T-cell (primary cell): ENCODE measurements at regions of chr22 and their contacts with region 1.

Region 1: GRCh38 chr22:38412435-38413084 is 42.4 kb downstream of the KCNJ4 start:
- DNase-seq: peak in 26 of 35 experiments; percentile 11 to 54 (median 30)
- ATAC-seq: peak in 3 of 4 experiments; percentile 38 to 70 (median 46)
- H3K4me3 ChIP-seq: no peak overlapping the region
- H3K4me3 Mint-ChIP-seq: peak overlapping the region in 1 of 3 donors; percentile 37
- H3K27ac ChIP-seq: no peak overlapping the region
- H3K27ac Mint-ChIP-seq: no peak overlapping the region
- H3K4me1 ChIP-seq: peaks cover 0 to 8% of the 10 kb centered on the region in 2 experiments
- H3K4me1 Mint-ChIP-seq: peaks cover 0 to 4% (median 2%) of the 10 kb centered on the region in 3 donors
- H3K27me3 ChIP-seq: peaks cover 0 to 5% of the 10 kb centered on the region in 2 experiments
- H3K27me3 Mint-ChIP-seq: peaks cover 0 to 2% of the 10 kb centered on the region in 2 donors

Region 2: GRCh38 chr22:38327805-38328204 is 84.8 kb before region 1 on chr22:
- CTCF ChIA-PET with region 1: no interaction called
- POLR2A ChIA-PET with region 1: no interaction called
- DNase-seq: peak in 1 of 35 experiments; percentile 30
- ATAC-seq: peak in 2 of 4 experiments; percentile 15 to 67
- H3K4me3 ChIP-seq: peak overlapping the region in 1 of 2 donors; percentile 10
- H3K4me3 Mint-ChIP-seq: peak overlapping the region in 2 of 3 donors; percentile 15 to 26
- H3K27ac ChIP-seq: no peak overlapping the region
- H3K27ac Mint-ChIP-seq: peak overlapping the region in 1 of 2 donors; percentile 74
- H3K4me1 ChIP-seq: peaks cover 0 to 11% of the 10 kb centered on the region in 2 experiments
- H3K4me1 Mint-ChIP-seq: peaks cover 4 to 5% (median 4%) of the 10 kb centered on the region in 3 donors
- H3K27me3 ChIP-seq: peaks cover 0 to 18% of the 10 kb centered on the region in 2 experiments
- H3K27me3 Mint-ChIP-seq: peaks cover 4 to 7% of the 10 kb centered on the region in 2 donors

Region 3: DNA sequence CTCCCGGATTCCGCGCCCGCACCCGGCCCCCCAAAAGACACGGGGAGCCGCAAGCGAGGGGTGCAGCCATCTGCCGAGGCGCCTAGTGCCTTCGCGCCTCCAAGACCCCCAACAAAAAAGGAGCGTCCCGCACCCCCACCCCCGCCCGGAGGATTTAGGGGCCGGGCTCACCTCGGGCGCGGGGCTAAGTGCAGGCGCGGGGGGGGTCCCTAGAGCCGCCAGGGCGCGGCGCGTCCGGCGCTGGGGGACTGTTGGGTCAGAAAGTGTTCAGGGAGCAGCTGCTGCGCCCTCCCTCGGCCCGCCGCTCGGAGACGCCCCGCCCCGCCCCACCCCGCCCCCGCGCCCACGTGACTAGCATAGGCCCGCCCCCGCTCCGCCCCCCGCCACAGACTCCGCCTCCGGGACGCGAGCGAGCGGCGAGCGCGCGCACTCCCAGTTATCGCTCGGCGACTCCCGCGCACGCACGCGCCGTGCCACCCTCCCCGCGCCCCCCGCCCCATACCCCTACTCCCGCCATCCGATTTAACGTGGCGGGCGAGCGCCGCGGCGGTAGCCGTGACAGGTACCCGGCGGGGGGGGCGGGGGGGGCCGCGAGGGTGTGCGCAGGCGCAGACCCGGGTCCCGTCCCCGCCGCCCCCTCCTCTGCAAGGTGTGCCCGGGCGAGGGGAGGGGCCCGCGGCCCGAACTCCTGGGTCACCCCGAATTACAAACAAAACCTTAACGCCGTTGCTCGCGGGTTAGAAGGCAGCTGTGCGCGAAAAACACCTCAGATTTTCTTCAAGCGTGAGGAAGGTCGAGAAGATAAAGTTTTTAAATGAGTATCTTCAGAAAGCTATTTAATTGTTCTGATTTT is 13.7 kb before region 1 on chr22:
- CTCF ChIA-PET with region 1: no interaction called
- POLR2A ChIA-PET with region 1: interaction called in 1 of 2 experiments, 19 read pairs
- DNase-seq: peak; percentile 50 to 87 (median 74)
- ATAC-seq: peak; percentile 78 to 84 (median 81)
- H3K4me3 ChIP-seq: peak overlapping the region; percentile 32 to 63
- H3K4me3 Mint-ChIP-seq: peak overlapping the region; percentile 71 to 86 (median 79)
- H3K27ac ChIP-seq: peak overlapping the region; percentile 44
- H3K27ac Mint-ChIP-seq: peak overlapping the region in 1 of 2 donors; percentile 61
- H3K4me1 ChIP-seq: peaks cover 4 to 13% of the 10 kb centered on the region in 2 experiments
- H3K4me1 Mint-ChIP-seq: peaks cover 31 to 41% (median 36%) of the 10 kb centered on the region in 3 donors
- H3K27me3 ChIP-seq: peaks cover 0 to 7% of the 10 kb centered on the region in 2 experiments
- H3K27me3 Mint-ChIP-seq: peaks cover 0 to 5% of the 10 kb centered on the region in 2 donors

Region 4: DNA sequence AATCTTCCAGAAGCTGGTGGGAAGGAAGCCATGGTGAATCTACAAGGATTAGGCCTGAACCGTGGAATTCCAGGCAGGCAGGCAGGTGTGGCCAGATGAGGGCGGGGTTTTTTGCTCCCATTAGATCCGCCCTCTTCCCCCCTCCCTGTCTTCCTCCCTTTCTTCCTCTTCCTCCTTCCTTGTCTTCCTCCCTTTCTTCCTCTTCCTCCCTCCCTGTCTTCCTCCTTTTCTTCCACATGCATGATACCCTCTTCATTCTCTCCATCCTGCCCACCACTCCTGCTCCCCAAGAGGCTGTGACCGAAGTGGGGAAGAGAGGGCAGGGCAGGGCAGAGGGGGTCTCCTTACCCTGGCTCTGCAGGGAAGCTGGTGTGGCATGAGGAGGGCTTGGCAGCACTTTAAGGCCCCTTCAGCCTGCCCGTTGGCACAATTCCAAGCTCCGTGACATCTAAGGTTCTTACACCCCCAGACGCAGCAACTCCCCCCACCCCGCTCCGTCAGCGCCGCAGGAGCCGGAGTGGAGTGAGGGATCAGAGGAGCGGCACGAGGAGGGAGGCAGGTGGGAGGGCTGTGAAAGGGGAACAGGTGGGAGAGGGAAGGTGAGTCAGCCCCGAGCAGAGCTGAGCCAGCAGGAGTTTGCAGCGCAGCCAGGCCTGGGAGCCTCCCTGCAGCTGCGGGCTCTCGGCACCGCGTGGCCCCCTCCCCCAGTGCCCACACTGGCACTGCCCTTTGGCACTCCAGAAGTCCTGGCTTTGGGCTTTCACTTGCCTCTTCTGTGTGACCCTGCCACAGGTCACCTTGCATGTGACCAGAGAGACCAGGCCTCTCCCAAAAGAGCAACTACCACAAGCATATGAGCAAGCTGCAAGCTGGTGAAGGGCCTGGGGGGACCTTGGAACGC is 10.3 kb after region 1 on chr22:
- CTCF ChIA-PET with region 1: no interaction called
- POLR2A ChIA-PET with region 1: interaction called in 1 of 2 experiments, 14 read pairs
- DNase-seq: no peak
- ATAC-seq: no peak
- H3K4me3 ChIP-seq: no peak overlapping the region
- H3K4me3 Mint-ChIP-seq: no peak overlapping the region
- H3K27ac ChIP-seq: no peak overlapping the region
- H3K27ac Mint-ChIP-seq: no peak overlapping the region
- H3K4me1 ChIP-seq: no peaks in the 10 kb centered on the region
- H3K4me1 Mint-ChIP-seq: no peaks in the 10 kb centered on the region
- H3K27me3 ChIP-seq: peaks cover 0 to 12% of the 10 kb centered on the region in 2 experiments
- H3K27me3 Mint-ChIP-seq: no peaks in the 10 kb centered on the region

Region 5: GRCh38 chr22:38442967-38443627 is 30.5 kb after region 1 on chr22:
- CTCF ChIA-PET with region 1: no interaction called
- POLR2A ChIA-PET with region 1: no interaction called
- DNase-seq: no peak
- ATAC-seq: no peak
- H3K4me3 ChIP-seq: no peak overlapping the region
- H3K4me3 Mint-ChIP-seq: no peak overlapping the region
- H3K27ac ChIP-seq: no peak overlapping the region
- H3K27ac Mint-ChIP-seq: no peak overlapping the region
- H3K4me1 ChIP-seq: no peaks in the 10 kb centered on the region
- H3K4me1 Mint-ChIP-seq: no peaks in the 10 kb centered on the region
- H3K27me3 ChIP-seq: peaks cover 0 to 38% of the 10 kb centered on the region in 2 experiments
- H3K27me3 Mint-ChIP-seq: peaks cover 5 to 15% of the 10 kb centered on the region in 2 donors